ENCODE measurements at regions of chr19 and their contacts with region 1.

Region 1: DNA sequence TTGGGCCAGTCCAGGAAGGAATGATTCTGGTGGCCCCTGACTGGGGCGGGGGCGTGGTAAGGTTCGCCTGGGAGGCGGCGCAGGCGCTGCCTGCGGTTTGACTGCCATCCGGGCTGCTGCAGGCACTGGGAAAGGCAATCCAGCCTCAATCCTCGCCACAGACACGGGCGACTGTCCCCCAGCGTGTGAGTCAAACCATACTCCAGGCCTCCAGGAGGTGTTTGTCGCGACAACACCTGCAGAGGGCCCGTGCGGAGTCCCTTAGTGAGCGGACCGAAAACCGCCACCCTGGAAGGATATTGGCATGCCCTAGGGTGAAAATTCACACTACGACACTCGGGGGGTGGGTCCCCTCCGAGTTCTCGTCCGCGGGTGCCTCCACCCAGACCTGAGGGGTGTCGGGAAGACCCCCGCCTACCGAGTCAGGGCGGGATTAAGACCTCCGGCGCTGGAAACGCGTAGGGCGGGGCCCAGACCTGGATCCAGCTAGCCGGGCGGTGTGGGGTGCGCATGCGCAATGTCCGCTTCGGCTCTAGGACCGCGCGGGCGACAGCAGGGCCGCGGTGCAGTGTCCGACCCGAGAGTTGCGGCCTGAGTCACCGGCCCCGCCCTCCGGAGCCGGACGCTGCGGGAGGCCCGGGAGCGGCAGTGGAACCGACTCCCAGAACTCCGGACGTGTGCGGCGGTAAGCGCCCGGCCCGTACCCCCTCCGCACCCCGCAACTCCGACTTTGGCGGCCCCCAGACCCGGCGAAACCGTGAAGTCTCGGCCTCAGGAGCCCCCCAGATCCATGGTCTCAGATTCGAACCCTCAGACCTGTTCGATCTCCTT is at the start of gene CAPNS1:
- DNase-seq: peak; percentile 97 to 99
- H3K4me3 ChIP-seq: peak within 1 kb of the TSS; percentile 70
- H3K4me3 Mint-ChIP-seq: peak within 1 kb of the TSS; percentile 93
- H3K27ac Mint-ChIP-seq: peak within 1 kb of the TSS; percentile 91
- H3K4me1 ChIP-seq: peaks cover 7% of the 10 kb centered on the region
- H3K4me1 Mint-ChIP-seq: peaks cover 21% of the 10 kb centered on the region
- H3K27me3 ChIP-seq: no peaks in the 10 kb centered on the region
- H3K27me3 Mint-ChIP-seq: no peaks in the 10 kb centered on the region
- CTCF ChIP-seq: peak; percentile 33 to 46
- total RNA-seq, gene CAPNS1: 480 and 489 TPM in 2 replicates

Region 2: DNA sequence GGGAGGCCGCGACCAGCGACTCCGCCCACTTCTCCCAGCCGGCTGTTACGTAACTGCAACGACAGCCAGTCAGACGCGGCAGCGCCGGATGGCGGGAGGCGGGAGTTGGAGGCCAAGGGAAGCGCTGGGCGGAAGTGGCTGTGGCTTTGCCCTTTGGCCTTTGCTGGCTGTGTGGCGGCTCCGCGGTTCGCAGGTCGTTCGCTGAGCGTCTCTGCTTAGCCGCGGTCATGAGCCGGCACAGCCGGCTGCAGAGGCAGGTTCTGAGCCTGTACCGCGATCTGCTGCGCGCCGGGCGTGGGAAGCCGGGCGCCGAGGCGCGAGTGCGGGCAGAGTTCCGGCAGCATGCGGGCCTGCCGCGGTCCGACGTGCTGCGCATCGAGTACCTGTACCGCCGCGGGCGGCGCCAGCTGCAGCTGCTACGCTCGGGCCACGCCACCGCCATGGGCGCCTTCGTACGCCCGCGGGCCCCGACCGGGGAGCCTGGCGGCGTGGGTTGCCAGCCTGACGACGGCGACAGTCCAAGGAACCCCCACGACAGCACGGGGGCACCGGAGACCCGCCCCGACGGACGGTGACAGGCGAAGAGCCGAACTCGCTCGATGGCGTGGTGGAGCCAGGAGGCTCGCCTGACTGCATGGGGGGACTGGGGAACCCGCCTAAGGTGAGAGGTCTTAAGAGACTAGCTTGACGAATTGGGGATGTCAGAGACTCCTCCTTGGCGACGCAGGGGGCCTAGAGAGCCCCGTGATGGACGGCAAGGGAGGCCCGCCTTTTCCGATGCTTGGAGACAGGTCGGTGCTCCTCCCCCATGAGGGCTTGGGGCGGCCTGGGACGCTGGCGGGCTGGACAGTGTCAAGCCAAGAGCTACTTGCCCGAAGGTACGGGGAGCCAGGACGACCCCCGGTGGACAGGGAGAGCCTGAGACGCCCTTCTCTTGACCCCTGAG is 144.4 kb before region 1 on chr19 and contains the start of gene SDHAF1:
- CTCF ChIA-PET with region 1: no interaction called
- POLR2A ChIA-PET with region 1: interaction called, 12 read pairs
- intact Hi-C with region 1: no loop called
- DNase-seq: peak; percentile 97
- H3K4me3 ChIP-seq: peak within 1 kb of the TSS; percentile 98
- H3K4me3 Mint-ChIP-seq: peak within 1 kb of the TSS; percentile 95
- H3K27ac Mint-ChIP-seq: peak within 1 kb of the TSS; percentile 93
- H3K4me1 ChIP-seq: no peaks in the 10 kb centered on the region
- H3K4me1 Mint-ChIP-seq: peaks cover 11% of the 10 kb centered on the region
- H3K27me3 ChIP-seq: no peaks in the 10 kb centered on the region
- H3K27me3 Mint-ChIP-seq: no peaks in the 10 kb centered on the region
- CTCF ChIP-seq: no peak
- total RNA-seq, gene SDHAF1: 26.2 and 28.1 TPM in 2 replicates

Region 3: DNA sequence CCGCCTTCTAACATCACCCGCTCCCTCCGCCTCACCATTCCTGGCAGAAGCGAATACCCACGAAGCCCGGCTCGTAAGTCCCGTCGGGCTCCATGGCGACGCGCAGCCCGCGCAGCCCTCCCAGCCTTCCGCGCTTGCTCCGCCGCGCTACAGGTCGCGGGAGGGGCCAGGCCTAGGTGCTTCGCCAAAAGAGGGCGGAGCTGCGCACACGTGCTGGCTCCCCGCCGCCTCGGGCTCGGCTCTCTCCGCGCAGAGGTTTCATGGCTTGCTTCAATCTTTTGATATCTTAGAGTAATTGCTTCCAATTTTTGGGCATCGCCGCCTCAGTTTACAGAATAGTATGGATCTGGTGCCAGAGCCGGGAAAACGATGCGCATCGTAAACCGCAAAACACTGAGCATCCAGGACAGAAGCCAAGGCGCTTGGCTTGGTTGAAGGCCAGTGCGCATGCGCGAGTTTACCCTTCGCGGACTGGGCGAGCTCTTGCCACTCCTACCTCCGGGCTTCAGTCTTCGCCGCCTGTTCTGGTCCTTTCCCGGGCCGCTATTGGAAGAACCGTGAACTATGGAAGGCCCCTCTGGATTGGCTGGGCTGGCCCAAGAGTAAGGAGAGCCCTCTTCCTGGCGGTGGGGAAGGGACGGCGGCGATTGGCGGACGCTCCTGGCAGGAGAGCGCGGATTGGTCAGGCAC is 24.8 kb before region 1 on chr19 and contains the start of gene POLR2I:
- CTCF ChIA-PET with region 1: no interaction called
- POLR2A ChIA-PET with region 1: no interaction called
- intact Hi-C with region 1: loop called (anchors 2 kb)
- DNase-seq: peak; percentile 100
- H3K4me3 ChIP-seq: peak within 1 kb of the TSS; percentile 92
- H3K4me3 Mint-ChIP-seq: peak within 1 kb of the TSS; percentile 92
- H3K27ac Mint-ChIP-seq: peak within 1 kb of the TSS; percentile 96
- H3K4me1 ChIP-seq: peaks cover 9% of the 10 kb centered on the region; the same call in 1 of the 2 replicates
- H3K4me1 Mint-ChIP-seq: peaks cover 32% of the 10 kb centered on the region
- H3K27me3 ChIP-seq: no peaks in the 10 kb centered on the region
- H3K27me3 Mint-ChIP-seq: no peaks in the 10 kb centered on the region
- CTCF ChIP-seq: no peak
- total RNA-seq, gene POLR2I: 121 and 129 TPM in 2 replicates

Region 4: GRCh38 chr19:36169084-36169760 is 29.5 kb after region 1 on chr19:
- CTCF ChIA-PET with region 1: no interaction called
- POLR2A ChIA-PET with region 1: no interaction called
- intact Hi-C with region 1: loop called (anchors 1 kb)
- DNase-seq: no peak
- H3K4me3 ChIP-seq: no peak overlapping the region
- H3K4me3 Mint-ChIP-seq: no peak overlapping the region
- H3K27ac Mint-ChIP-seq: no peak overlapping the region
- H3K4me1 ChIP-seq: peaks cover 4% of the 10 kb centered on the region; the same call in 1 of the 2 replicates
- H3K4me1 Mint-ChIP-seq: peaks cover 7% of the 10 kb centered on the region
- H3K27me3 ChIP-seq: no peaks in the 10 kb centered on the region
- H3K27me3 Mint-ChIP-seq: no peaks in the 10 kb centered on the region
- CTCF ChIP-seq: no peak

Measured in Caco-2 (cell line).